Right ventricle myocardium inferior (tissue), 1 donor: ENCODE measurements at regions of chr17 and their contacts with region 1.

Region 1: DNA sequence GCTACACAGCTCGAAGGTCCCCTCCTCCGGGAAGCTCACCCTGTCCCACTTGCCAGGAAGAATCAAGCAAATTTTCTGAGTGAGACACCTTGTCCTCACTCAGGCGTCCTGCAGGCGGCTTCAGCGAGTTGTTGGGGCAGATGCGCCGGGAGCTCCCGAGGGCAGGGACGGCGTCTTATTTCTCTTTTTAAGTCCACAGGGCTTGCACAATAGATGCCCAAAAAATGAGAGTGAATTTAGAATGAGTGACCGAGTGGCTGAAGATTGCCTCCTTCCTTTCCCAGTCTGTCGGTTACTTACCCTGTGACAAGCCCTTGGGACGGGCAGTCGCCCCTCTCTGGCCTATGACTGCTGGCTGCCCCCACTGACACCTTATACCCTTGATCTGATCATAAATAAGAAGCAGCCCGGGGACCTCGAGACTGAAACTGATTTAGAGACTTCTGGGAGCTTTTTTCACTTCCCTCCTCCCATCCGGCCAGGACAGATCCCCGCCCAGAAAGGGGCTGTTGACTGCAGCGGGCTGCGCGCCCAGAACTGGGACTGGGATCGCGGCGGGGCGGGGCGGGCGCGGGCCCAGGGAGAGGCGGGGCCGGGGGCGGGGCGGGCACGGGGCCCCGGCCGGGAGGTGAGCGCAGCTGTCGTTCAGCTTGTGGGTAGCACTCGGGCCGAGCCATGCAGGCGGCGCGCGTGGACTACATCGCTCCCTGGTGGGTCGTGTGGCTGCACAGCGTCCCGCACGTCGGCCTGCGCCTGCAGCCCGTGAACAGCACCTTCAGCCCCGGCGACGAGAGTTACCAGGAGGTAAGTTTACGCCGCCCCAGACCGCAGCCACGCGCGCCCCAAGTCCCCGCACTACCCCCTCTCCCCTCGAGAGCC is at the start of gene TTYH2:
- DNase-seq: peak; percentile 93
- ATAC-seq: peak; percentile 89
- total RNA-seq, gene TTYH2: 39.2 TPM

Region 2: GRCh38 chr17:74199306-74200092 is 13.7 kb before region 1 on chr17:
- intact Hi-C with region 1: no loop called
- DNase-seq: peak; percentile 84
- ATAC-seq: no peak

Region 3: DNA sequence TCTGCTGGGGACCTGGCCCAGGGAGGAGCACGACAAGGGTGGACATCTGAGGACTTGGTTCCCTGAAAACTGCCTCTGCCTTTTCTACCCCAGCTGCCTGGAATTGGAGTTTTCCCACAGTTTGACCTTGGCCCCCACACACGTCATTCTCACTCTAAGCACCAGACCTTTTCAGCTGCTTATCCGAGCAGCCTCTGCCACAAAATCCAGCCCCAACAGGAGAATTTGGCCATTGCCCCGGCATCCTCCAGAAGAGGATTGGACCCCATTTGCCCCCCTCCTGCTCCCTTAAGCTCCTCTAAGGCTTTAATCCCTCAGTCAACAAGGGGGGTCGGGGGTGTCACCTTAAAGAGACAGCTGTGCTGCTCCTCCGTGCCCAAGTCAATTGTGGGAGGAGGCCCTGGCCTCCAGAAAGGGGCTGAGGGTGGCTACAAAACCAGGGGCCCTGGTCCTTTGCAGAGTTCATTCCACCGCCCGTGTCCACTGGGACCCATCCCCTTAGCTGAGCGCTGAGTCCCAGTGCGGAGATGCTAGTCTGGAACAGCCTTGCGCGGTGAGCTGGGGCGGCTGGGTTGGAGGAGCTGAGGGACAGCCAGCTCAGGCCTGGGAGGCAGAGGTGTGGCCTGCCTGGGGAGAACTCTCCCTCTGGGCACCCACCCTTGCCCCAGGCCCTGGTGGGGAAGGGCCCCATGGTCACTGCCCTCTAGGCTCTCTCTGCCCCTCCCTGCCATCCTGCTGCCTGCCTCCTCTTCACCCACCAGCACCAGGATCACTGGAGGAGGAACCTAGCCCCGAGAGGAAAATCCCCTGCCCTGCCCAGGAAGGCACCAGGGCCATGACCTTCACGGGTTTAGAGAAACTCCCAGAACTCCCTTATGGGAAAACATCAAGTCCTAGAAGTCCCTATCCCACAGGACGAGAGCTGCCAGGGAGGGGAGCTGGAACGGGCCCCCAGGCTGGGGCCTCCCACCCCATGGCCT is 19.1 kb after region 1 on chr17:
- intact Hi-C with region 1: no loop called
- DNase-seq: no peak
- ATAC-seq: no peak

Region 4: DNA sequence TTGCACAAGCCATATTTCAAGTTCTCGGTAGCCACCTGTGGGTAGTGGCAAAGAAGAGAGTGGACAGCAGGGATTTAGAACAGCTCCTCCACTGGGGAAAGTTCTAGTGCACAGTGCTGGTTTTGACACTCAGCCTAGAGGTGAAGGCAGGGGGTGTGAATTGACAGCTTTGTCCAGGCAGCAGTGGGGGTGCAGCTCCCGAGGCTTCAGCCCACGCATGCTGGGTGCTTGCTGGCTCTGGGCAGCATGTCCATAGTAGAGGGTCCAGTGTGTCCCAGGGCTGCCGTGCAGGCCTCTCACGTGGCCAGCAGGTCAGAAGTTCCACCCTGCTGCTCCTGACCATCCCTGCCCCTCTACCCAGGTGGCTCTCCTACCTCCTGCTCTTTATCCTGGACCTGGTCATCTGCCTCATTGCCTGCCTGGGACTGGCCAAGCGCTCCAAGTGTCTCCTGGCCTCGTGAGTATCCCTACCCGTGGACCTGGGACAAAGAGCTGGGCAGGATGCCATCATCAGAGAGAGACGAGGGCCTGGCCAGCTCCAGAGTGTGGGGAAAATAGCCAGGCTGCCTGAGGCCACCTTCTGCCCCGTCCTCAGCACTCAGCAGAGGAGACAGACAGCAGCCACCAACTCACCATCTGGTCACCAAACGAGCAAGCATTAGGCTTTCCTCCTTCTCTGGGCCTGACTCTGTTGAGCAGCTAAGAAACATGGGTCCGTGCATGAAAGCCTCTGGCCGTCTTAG is 30.0 kb after region 1 on chr17:
- intact Hi-C with region 1: loop called (anchors 2 kb)
- DNase-seq: no peak
- ATAC-seq: peak; percentile 87

Region 5: DNA sequence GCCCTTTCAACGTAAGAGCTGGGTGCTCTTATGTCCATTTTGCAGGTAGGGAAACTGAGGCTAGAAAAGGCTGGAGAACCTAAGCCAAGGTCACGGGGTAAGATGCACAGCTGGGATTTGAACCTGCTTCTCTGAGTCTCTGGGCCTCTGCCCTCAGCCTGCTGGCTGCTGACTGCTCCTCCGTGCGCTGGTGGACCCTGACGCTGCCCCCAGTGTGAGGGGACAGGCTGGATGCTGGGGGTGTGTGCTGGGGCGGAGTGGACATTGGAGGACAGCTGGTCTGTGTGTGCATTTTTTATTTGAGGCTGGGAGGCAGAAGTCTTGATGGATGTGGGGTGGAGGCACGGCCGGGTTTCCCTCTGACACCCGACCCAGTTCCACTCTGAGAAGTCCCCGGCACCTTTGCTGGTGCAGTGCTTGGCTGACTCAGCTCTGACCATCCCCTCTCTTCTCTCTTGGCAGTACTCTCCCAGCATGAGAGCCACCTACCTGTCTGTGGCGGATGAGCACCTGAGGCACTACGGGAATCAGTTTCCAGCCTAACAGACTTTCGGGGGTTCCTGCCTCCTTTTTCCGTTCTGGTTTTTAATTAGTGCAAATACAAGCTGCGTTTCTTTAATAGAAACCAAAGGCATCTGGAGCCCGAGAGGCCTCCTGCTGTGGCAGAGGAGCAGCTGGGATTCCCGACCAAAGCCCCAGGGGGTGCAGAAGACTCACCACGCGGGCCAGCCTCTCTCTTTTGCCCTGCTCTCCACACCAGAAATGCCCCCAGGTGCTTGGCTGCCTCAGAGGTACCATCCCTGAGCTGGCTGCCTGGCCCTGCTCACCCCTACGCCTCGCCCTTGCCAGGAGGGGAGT is 46.7 kb after region 1 on chr17:
- intact Hi-C with region 1: no loop called
- DNase-seq: no peak
- ATAC-seq: no peak

Region 6: DNA sequence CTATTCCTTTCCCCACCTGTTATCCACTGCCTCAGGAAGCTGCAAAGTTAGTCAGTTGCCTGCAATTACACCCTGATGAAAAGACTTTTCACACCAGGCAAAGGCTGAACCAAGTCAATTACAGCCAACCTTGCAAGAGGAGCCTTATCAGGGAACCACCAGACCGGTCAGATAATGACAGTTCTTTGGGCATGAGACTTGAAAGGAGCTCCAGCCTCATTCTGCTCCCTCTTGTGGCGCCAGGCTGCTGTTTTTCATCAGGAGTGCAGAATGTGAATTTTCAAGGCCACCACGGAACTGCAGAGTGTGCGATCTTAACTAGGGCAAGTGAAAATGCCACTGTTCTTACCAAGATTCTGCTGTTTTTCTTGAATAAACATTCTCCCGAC is 83.4 kb after region 1 on chr17:
- intact Hi-C with region 1: loop called (anchors 1 kb)
- DNase-seq: peak; percentile 64
- ATAC-seq: peak; percentile 86

Region 7: GRCh38 chr17:74325743-74326379 is 112.7 kb after region 1 on chr17 and contains the start of gene KIF19:
- intact Hi-C with region 1: no loop called
- DNase-seq: peak; percentile 77
- ATAC-seq: peak; percentile 80
- total RNA-seq, gene KIF19: 0.16 TPM

Region 8: GRCh38 chr17:74354123-74354522 is 141.0 kb after region 1 on chr17:
- intact Hi-C with region 1: loop called (anchors 5 kb)
- DNase-seq: no peak
- ATAC-seq: peak; percentile 63

Region 9: DNA sequence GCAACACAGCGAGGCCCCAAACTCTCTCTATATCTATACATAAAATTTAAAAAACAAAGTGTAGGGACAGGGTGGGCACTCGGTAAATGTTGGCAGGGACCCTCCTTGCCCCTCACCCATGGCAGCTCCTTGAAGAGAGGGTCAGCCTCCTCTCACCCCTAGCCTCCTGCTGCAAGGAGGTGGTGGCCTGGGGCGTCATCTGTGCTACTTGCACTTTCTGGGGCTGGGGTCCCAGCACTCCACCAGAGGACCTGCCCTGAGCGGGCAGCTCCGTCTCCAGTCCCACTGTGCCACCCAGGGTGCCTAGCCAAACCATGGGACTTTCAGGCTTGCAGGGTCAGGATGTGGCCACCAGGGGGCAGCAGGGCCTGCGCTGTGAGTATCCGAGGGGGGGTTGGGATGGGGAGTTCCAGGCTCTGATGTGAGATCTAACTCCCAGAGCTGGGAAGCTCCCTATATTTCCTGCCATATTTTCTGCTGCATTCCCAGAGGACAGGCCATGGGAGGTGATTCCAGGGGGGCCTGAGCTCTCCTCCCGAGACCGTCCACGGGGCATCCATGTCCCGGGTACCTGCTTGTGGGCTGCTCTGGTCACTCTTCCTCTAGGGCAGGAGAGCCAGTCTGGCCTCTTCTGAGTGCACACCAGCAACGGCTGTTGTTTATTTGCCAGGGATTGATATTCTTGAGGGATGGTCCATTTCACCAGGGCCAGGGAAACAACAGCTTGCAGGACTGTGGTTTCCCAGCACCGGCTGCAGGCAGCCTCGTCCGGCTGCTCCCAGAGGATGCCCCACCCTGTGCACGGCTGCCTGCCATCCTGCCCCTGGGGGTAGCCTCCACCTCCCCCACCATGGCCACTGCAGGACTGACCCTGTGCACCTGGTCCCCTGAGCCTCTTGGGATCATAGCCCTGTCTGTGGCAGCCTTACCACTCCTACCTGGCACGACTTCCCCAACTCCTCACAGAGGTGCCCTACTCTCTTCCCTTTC is 155.2 kb after region 1 on chr17:
- intact Hi-C with region 1: loop called (anchors 5 kb)
- DNase-seq: peak; percentile 89
- ATAC-seq: peak; percentile 57

Region 10: DNA sequence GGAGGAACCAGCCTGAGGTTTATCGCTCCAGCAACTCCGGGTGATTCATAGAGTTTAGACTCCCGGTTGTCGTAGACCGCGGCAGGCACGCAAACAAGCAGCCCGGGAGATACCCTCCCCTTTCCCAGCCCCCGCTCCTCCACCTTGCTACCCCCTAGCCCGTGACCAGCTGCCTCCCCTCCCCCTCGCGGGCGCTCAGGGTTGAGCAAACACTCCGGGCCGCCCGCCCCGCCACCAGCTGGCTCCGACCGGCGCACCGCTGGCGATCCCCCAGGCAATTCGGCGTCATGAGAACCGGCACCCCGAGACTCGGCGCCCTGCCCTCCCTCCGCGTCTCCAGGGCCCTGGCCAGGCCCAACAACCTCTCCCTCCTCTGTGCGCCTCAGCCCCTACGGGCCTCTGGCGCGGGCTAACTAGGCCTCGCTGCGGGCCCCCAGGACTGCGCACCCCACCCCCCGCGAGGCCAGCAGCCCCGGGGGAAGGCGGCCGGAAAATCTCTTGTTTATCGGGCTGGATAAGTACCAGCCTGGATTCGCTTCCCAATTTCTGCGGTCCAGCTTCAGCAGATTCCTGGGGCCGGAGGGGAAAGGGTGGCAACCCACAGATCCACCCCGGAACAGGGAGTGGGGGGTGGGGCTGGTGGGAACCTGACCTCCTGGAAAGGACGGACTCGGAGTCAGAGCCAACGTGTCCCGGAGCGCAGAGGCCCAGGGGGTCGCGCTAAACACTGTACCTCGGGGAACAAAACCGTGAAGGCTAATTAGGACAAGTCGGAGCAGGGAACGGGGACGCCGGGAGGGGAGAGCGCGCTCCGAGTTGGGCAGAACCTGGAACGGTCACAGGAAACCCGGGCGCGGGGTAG is 217.8 kb after region 1 on chr17:
- intact Hi-C with region 1: loop called (anchors 5 kb)
- DNase-seq: peak; percentile 91
- ATAC-seq: peak; percentile 70

Region 11: GRCh38 chr17:74457146-74457819 is 244.1 kb after region 1 on chr17:
- intact Hi-C with region 1: loop called (anchors 5 kb)
- DNase-seq: peak; percentile 93
- ATAC-seq: no peak